ENCODE measurements at regions of chr2 and their contacts with region 1.

Region 1: DNA sequence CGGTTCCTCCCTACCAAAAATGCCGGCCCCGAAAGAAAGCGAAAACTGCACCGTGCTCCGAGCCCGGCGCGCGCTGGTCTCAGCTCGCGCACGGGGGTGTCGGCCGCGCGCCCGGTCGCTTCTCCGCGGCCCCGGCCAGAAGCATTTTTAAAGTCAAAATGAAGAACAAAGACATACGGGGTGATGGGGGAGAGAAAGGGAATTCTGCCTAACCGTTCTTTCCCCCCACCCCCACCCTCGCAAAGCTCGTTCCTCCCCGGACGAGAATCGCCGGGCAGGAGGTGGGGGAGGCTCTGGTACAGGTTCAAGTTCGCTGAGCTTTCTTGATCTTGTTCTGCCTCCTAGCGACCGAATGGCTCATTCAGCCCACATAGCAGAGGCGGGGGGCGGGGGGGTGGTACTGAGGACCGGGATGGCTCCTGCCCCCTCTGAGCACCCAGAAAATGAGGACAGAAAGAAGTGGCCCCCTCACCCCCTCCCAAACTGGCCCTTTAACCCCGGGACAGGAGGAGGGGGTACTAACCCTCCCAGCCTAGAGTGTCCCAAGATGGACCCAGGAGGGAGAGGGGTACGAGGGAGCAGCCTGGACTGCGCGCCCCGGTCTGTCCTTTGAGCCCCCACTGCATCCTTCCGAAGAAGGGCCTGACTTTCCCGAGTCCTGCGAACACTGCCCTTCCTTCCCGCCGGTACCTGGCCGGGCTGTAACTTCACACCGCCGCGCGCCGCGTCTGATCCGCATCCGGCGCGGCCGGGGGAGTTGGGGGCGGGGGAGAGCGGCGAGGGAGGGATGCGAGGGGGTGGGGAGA is 3.1 kb downstream of the BCL11A start:
- DNase-seq: no peak
- ATAC-seq: peak; percentile 80
- H3K4me3 ChIP-seq: peak overlapping the region; percentile 81
- H3K27ac ChIP-seq: peak overlapping the region; percentile 89
- H3K4me1 ChIP-seq: peaks cover 15% of the 10 kb centered on the region
- H3K27me3 ChIP-seq: peaks cover 0 to 3% of the 10 kb centered on the region in 2 experiments; a peak in 2 of 4 replicates
- CTCF ChIP-seq: peak; percentile 77 to 92 (median 78)
- EP300 ChIP-seq: no peak
- POLR2A ChIP-seq: peak; percentile 44; the same call in 1 of the 2 replicates
- RAD21 ChIP-seq: peak; percentile 97

Region 2: DNA sequence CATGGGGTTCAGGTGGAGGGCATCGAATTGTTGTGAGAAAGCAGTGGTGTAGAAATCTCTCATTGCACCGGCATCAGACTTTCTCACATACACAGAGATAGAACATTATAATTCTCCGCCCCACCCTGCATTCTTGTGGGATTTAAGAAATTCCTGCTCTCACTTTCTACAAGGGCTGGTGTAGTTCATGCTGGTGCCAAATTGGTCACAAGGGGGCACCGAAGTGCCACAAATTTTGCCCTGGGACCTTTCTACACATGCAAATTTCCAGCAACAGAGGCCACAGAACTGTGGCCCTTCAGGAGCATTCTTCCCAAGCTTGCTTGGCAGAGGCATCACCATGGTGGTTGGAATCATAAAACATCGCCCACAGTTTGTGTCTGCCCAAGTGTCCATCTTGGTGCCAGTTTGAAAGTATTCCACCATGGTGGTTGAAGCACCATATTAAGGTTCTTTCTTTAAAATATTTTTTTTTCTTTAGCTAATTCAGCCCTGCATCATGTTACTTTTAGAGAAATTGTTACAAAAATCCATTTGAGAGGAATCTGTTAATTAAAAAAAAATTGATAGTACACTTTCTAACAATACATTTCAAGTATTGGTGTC is 1788.1 kb before region 1 on chr2:
- CTCF ChIA-PET with region 1: interaction called, 6 read pairs
- POLR2A ChIA-PET with region 1: no interaction called
- RAD21 ChIA-PET with region 1: no interaction called
- SMC1A ChIA-PET with region 1: no interaction called
- in situ Hi-C with region 1: no loop called
- intact Hi-C with region 1: loop called (anchors 10 kb)
- DNase-seq: no peak
- ATAC-seq: peak; percentile 87
- H3K4me3 ChIP-seq: no peak overlapping the region
- H3K27ac ChIP-seq: no peak overlapping the region
- H3K4me1 ChIP-seq: no peaks in the 10 kb centered on the region
- H3K27me3 ChIP-seq: no peaks in the 10 kb centered on the region; a peak in 1 of 4 replicates
- CTCF ChIP-seq: peak; percentile 58 to 68 (median 62); a peak in 5 of 6 replicates
- EP300 ChIP-seq: no peak
- POLR2A ChIP-seq: no peak
- RAD21 ChIP-seq: peak; percentile 80

Region 3: GRCh38 chr2:59301466-59302402 is 1248.6 kb before region 1 on chr2:
- CTCF ChIA-PET with region 1: interaction called, 8 read pairs
- POLR2A ChIA-PET with region 1: interaction called, 5 read pairs
- RAD21 ChIA-PET with region 1: interaction called, 4 read pairs
- SMC1A ChIA-PET with region 1: interaction called, 3 read pairs
- in situ Hi-C with region 1: no loop called
- intact Hi-C with region 1: loop called (anchors 2 kb)
- DNase-seq: no peak
- ATAC-seq: peak; percentile 74
- H3K4me3 ChIP-seq: no peak overlapping the region
- H3K27ac ChIP-seq: no peak overlapping the region
- H3K4me1 ChIP-seq: no peaks in the 10 kb centered on the region
- H3K27me3 ChIP-seq: no peaks in the 10 kb centered on the region
- CTCF ChIP-seq: peak; percentile 37 to 54 (median 44); a peak in 5 of 6 replicates
- EP300 ChIP-seq: no peak
- POLR2A ChIP-seq: no peak
- RAD21 ChIP-seq: peak; percentile 51

Region 4: GRCh38 chr2:59858540-59858939 is 691.8 kb before region 1 on chr2:
- CTCF ChIA-PET with region 1: no interaction called
- POLR2A ChIA-PET with region 1: no interaction called
- RAD21 ChIA-PET with region 1: no interaction called
- SMC1A ChIA-PET with region 1: no interaction called
- in situ Hi-C with region 1: no loop called
- intact Hi-C with region 1: no loop called
- DNase-seq: no peak
- ATAC-seq: no peak
- H3K4me3 ChIP-seq: no peak overlapping the region
- H3K27ac ChIP-seq: no peak overlapping the region
- H3K4me1 ChIP-seq: no peaks in the 10 kb centered on the region
- H3K27me3 ChIP-seq: no peaks in the 10 kb centered on the region
- CTCF ChIP-seq: no peak
- EP300 ChIP-seq: no peak
- POLR2A ChIP-seq: no peak
- RAD21 ChIP-seq: no peak

Region 5: GRCh38 chr2:59888015-59888414 is 662.4 kb before region 1 on chr2:
- CTCF ChIA-PET with region 1: no interaction called
- POLR2A ChIA-PET with region 1: no interaction called
- RAD21 ChIA-PET with region 1: no interaction called
- SMC1A ChIA-PET with region 1: no interaction called
- in situ Hi-C with region 1: no loop called
- intact Hi-C with region 1: loop called (anchors 5 kb)
- DNase-seq: peak; percentile 15
- ATAC-seq: peak; percentile 94
- H3K4me3 ChIP-seq: no peak overlapping the region
- H3K27ac ChIP-seq: no peak overlapping the region
- H3K4me1 ChIP-seq: peaks cover 18% of the 10 kb centered on the region
- H3K27me3 ChIP-seq: no peaks in the 10 kb centered on the region
- CTCF ChIP-seq: no peak
- EP300 ChIP-seq: no peak
- POLR2A ChIP-seq: no peak
- RAD21 ChIP-seq: peak; percentile 49

Region 6: DNA sequence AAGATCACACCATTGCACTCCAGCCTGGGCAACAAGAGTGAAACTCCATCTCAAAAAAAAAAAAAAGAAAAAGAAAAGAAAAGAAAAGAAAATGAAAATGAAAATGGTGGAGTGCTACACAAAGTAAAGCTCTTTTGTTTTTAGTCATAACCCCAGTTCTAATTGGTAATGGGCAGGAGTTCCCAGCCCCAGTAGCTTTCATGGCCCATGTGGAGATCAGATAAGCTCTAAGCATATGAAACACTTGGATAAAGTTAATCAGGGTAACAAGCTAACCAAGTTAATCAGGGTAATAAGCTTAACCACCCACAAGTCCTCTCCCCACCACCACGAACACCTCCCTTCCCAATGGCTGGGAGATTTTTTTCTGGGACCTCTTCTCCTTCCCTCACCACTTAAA is 237.8 kb before region 1 on chr2:
- CTCF ChIA-PET with region 1: no interaction called
- POLR2A ChIA-PET with region 1: no interaction called
- RAD21 ChIA-PET with region 1: no interaction called
- SMC1A ChIA-PET with region 1: no interaction called
- in situ Hi-C with region 1: no loop called
- intact Hi-C with region 1: loop called (anchors 5 kb)
- DNase-seq: peak; percentile 58
- ATAC-seq: peak; percentile 84
- H3K4me3 ChIP-seq: no peak overlapping the region
- H3K27ac ChIP-seq: peak overlapping the region; percentile 70; the same call in 1 of the 2 replicates
- H3K4me1 ChIP-seq: peaks cover 67% of the 10 kb centered on the region
- H3K27me3 ChIP-seq: no peaks in the 10 kb centered on the region
- CTCF ChIP-seq: no peak
- EP300 ChIP-seq: no peak
- POLR2A ChIP-seq: no peak
- RAD21 ChIP-seq: no peak

Region 7: DNA sequence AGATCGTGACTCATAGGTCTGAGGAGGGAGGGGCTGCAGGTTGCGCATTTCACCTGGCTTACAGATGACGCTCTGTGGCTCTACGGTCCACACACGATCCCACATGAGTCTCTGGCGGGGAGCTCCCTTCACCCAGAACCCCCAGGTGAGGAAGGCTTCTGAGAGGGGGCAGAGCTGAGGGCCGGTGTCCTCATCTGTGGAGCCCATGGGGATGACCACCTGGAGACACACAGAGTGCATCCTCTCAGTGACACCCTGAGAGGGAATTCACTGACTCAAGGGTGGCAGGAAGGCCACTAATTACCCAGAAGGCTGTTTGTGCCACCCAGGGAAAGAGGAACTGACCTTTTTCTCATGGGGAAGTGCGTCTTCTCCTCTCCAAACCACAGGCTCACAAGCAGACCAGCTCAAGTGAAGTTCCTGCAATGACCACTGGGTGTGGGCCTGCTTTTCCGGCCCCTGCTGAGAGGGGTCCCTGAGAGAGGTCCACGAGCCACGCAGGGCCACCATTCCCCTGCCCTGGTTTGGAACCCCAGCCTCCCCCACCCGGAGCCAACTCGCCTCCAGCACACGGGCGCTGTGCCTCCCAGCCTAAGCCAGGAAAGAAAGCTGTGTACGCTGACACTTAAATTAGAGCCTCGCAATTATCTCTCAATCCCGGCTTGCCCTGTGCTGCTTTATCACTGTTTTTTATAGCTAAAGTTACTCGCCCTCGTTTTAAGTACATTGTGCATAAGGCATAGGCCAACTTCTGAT is 111.0 kb before region 1 on chr2:
- CTCF ChIA-PET with region 1: interaction called, 8 read pairs
- POLR2A ChIA-PET with region 1: no interaction called
- RAD21 ChIA-PET with region 1: interaction called, 8 read pairs
- SMC1A ChIA-PET with region 1: no interaction called
- in situ Hi-C with region 1: no loop called
- intact Hi-C with region 1: loop called (anchors 2 kb)
- DNase-seq: peak; percentile 96
- ATAC-seq: peak; percentile 98
- H3K4me3 ChIP-seq: peak overlapping the region; percentile 38; the same call in 1 of the 2 replicates
- H3K27ac ChIP-seq: peak overlapping the region; percentile 94
- H3K4me1 ChIP-seq: peaks cover 31% of the 10 kb centered on the region
- H3K27me3 ChIP-seq: no peaks in the 10 kb centered on the region
- CTCF ChIP-seq: peak; percentile 62 to 87 (median 87)
- EP300 ChIP-seq: peak; percentile 64 to 98; a peak in 3 of 4 replicates
- POLR2A ChIP-seq: peak; percentile 60; the same call in 1 of the 2 replicates
- RAD21 ChIP-seq: peak; percentile 62

Region 8: GRCh38 chr2:60515721-60516226 is 34.6 kb before region 1 on chr2:
- CTCF ChIA-PET with region 1: interaction called, 3 read pairs
- POLR2A ChIA-PET with region 1: no interaction called
- RAD21 ChIA-PET with region 1: no interaction called
- SMC1A ChIA-PET with region 1: no interaction called
- in situ Hi-C with region 1: no loop called
- intact Hi-C with region 1: loop called (anchors 2 kb)
- DNase-seq: peak; percentile 90
- ATAC-seq: peak; percentile 94
- H3K4me3 ChIP-seq: 0 out of 2 replicates have a peak overlapping the region, but pooled peaks have one; percentile 1
- H3K27ac ChIP-seq: peak overlapping the region; percentile 87
- H3K4me1 ChIP-seq: peaks cover 77% of the 10 kb centered on the region
- H3K27me3 ChIP-seq: no peaks in the 10 kb centered on the region
- CTCF ChIP-seq: no peak; a peak in 1 of 6 replicates
- EP300 ChIP-seq: peak; percentile 39 to 53; a peak in 1 of 4 replicates
- POLR2A ChIP-seq: no peak
- RAD21 ChIP-seq: no peak